MCF 10A (cell line): ENCODE measurements at regions of chr11 and their contacts with region 1.

Region 1: GRCh38 chr11:9861860-9862725 is 198.2 kb downstream of the SWAP70 start:
- DNase-seq: peak; percentile 80
- H3K4me3 Mint-ChIP-seq: no peak overlapping the region
- H3K27ac Mint-ChIP-seq: no peak overlapping the region
- H3K4me1 Mint-ChIP-seq: peaks cover 8% of the 10 kb centered on the region
- H3K27me3 Mint-ChIP-seq: no peaks in the 10 kb centered on the region
- CTCF ChIP-seq: peak; percentile 80

Region 2: DNA sequence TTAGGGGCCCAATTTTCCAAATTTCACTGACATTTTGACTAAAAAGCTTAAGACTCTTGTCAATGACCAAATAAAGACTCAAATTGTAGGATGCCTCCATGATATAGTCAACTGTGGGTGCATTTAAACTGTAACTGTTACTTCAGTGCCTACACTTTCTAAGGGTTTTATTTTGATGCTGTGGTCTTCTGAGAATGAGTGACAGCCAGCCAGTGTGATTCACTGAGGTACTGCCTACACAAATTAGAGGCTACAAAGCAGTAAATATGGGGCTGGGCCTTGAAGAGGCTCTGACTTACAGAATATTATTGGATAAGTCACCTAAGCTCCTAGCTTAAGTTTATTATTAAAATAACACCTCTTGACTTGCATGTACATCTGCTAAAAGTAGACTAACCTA is 12.4 kb after region 1 on chr11:
- CTCF ChIA-PET with region 1: interaction called, 11 read pairs
- POLR2A ChIA-PET with region 1: no interaction called
- intact Hi-C with region 1: no loop called
- DNase-seq: no peak
- H3K4me3 Mint-ChIP-seq: no peak overlapping the region
- H3K27ac Mint-ChIP-seq: no peak overlapping the region
- H3K4me1 Mint-ChIP-seq: no peaks in the 10 kb centered on the region
- H3K27me3 Mint-ChIP-seq: no peaks in the 10 kb centered on the region
- CTCF ChIP-seq: no peak

Region 3: DNA sequence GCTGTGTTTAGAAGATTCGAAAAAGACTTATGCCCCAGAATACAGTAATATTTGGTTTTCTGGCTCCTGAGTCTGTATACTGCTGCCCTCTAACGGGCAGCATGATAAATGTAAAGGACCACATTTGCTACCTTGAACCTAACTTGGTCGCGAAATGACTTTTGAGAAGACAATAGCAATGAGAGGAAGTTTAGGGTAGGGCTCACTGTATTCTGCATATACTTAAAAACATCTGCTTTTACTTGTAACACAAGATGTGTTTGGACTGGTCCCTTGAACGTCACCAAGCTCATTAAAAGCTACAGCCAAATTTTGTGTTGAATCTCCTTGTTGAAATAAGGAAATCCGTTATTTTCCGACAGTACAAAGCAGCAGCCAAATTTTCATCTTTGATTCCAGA is 110.9 kb after region 1 on chr11:
- CTCF ChIA-PET with region 1: interaction called, 31 read pairs
- POLR2A ChIA-PET with region 1: interaction called, 5 read pairs
- intact Hi-C with region 1: loop called (anchors 1 kb)
- DNase-seq: peak; percentile 60
- H3K4me3 Mint-ChIP-seq: no peak overlapping the region
- H3K27ac Mint-ChIP-seq: peak overlapping the region; percentile 8
- H3K4me1 Mint-ChIP-seq: peaks cover 6% of the 10 kb centered on the region
- H3K27me3 Mint-ChIP-seq: no peaks in the 10 kb centered on the region
- CTCF ChIP-seq: peak; percentile 76

Region 4: DNA sequence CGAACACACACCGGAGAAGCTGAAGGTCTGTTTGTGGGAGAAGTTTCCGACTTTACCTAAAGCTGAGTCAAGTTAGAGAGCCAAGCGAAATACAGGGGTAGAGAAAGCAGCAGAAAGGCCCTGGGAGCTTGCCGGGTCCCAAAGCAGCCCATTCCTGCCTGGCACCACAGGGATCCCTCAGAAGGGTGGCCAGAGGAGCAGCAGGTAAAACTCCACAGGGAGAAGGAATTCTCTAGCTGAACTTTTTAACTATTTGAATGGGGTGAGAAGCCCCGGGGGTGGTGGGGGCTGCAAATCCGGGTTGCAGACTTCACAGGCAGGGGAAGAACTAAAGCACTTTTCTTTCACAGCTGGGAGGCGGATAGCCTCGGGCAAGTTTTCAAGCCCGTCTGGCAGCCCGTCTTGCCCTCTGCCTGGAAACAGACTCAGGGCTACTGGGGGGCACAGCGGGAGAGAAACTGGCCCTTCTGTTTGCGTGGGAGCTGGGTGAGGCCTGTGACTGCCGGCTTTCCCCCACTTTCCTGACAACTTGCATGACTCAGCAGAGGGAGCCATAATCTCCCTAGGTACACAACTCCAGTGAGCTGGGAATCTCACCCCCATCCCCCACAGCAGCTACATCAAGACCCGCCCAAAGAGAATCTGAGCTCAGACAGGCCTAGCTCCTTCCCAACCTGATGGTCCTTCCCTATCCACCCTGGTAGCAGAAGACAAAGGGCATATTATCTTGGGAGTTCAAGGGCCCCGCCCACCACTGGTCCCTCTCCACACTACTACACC is 120.9 kb after region 1 on chr11:
- CTCF ChIA-PET with region 1: interaction called, 10 read pairs
- POLR2A ChIA-PET with region 1: interaction called, 4 read pairs
- intact Hi-C with region 1: no loop called
- DNase-seq: peak; percentile 80
- H3K4me3 Mint-ChIP-seq: peak overlapping the region; percentile 55
- H3K27ac Mint-ChIP-seq: peak overlapping the region; percentile 91
- H3K4me1 Mint-ChIP-seq: peaks cover 25% of the 10 kb centered on the region
- H3K27me3 Mint-ChIP-seq: no peaks in the 10 kb centered on the region
- CTCF ChIP-seq: no peak

Region 5: GRCh38 chr11:10181811-10182210 is 319.7 kb after region 1 on chr11:
- CTCF ChIA-PET with region 1: no interaction called
- POLR2A ChIA-PET with region 1: no interaction called
- intact Hi-C with region 1: loop called (anchors 10 kb)
- DNase-seq: peak; percentile 30
- H3K4me3 Mint-ChIP-seq: no peak overlapping the region
- H3K27ac Mint-ChIP-seq: no peak overlapping the region
- H3K4me1 Mint-ChIP-seq: peaks cover 7% of the 10 kb centered on the region
- H3K27me3 Mint-ChIP-seq: no peaks in the 10 kb centered on the region
- CTCF ChIP-seq: peak; percentile 28

Region 6: DNA sequence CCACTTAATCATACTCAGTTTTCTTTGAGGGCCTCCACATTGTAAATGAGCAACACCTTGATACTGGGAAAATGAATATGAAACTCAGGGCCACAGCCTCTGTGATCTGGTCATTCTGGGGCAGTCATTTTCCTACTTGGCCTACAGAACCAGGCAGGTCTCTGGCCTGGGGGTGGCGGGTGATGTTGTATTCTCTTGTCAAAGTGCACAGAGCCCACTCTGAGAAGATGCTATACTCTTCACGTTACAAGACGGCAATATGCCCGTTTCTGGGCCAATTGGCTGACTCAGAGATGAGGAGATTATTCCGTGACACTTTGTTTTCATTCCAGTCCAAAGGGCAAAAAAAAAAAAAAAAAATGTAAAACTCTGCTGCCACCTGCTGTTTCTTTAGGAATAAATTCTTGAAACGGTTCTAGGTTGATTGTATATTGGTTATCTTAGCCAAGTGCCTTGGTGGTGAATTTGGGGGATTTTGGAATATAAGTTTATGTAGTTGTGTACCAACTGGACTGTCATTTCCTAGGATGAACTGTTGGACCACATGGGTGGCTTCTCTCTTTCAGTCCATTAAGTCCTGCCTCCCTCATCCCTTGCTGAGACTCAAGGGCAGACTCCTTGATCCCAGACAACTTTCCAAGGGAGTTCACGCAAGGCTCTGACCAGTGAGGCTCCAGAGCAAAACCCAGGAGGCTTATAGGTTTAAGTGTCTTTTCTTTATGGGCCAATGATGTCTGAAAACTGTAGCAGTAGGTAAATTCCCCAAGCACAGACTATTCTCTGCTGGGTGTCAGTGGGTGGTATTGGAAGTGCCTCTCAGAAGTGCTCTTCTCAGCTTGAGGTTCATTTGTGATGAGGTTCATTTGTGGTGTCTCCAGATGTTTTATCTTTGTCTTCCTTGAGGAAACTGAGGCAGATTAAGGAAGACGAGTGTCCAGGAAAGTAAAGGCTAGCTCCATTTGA is 461.0 kb after region 1 on chr11:
- CTCF ChIA-PET with region 1: interaction called, 4 read pairs
- POLR2A ChIA-PET with region 1: interaction called, 3 read pairs
- intact Hi-C with region 1: loop called (anchors 1 kb)
- DNase-seq: peak; percentile 87
- H3K4me3 Mint-ChIP-seq: no peak overlapping the region
- H3K27ac Mint-ChIP-seq: peak overlapping the region; percentile 54
- H3K4me1 Mint-ChIP-seq: peaks cover 20% of the 10 kb centered on the region
- H3K27me3 Mint-ChIP-seq: no peaks in the 10 kb centered on the region
- CTCF ChIP-seq: peak; percentile 43